Activated CD8-positive, alpha-beta memory T cell treated with anti-CD3 and anti-CD28 coated beads, Interleukin-2, amount 10 ng/mL, durations not matched to agents 7 days and 5 days (primary cell): ENCODE measurements at regions of chr16 and their contacts with region 1.

Region 1: GRCh38 chr16:3129137-3130131 is 5.4 kb upstream of the ZNF213 start:
- DNase-seq: peak; percentile 89
- ATAC-seq: peak; percentile 74
- H3K4me3 Mint-ChIP-seq: peak overlapping the region; percentile 88
- H3K27ac Mint-ChIP-seq: peak overlapping the region; percentile 88
- H3K4me1 Mint-ChIP-seq: peaks cover 58% of the 10 kb centered on the region
- H3K27me3 Mint-ChIP-seq: no peaks in the 10 kb centered on the region

Region 2: GRCh38 chr16:3045357-3045728 is 84.1 kb before region 1 on chr16:
- CTCF ChIA-PET with region 1: interaction called, 13 read pairs
- DNase-seq: peak; percentile 74
- ATAC-seq: peak; percentile 41
- H3K4me3 Mint-ChIP-seq: peak overlapping the region; percentile 88
- H3K27ac Mint-ChIP-seq: peak overlapping the region; percentile 83
- H3K4me1 Mint-ChIP-seq: peaks cover 40% of the 10 kb centered on the region
- H3K27me3 Mint-ChIP-seq: peaks cover 11% of the 10 kb centered on the region

Region 3: DNA sequence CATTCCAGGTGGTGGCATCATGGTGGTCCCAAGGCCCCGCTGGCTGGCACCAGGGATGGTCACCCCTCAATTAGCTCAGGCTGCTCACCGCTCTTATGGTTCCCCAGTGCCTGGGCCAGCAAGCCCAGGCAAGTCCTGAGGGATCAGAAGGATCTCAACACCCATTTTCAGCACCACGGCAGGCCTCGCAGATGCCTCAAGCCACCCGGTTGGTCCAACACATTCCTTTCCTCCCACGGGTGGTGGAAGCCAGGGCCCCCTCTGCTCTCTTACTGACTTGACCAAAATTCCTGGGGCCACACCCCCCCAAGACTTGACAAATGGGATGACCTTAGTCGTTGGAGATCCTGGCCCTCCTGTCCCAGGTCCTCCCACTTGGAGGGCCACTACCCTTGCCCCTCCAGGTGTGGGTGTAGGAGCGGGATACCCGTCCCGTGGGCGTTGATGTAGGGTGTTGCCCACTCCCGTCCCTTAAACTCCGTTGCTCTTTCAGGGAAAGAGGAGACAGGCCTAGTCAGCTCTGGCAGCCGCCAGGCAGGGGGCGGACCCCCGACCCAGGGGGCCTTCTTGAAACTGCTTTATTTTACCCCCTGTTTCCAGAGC is 11.1 kb before region 1 on chr16:
- CTCF ChIA-PET with region 1: interaction called, 25 read pairs
- DNase-seq: no peak
- ATAC-seq: no peak
- H3K4me3 Mint-ChIP-seq: no peak overlapping the region
- H3K27ac Mint-ChIP-seq: no peak overlapping the region
- H3K4me1 Mint-ChIP-seq: peaks cover 7% of the 10 kb centered on the region
- H3K27me3 Mint-ChIP-seq: peaks cover 5% of the 10 kb centered on the region

Region 4: GRCh38 chr16:3158471-3159314 is 29.3 kb after region 1 on chr16:
- CTCF ChIA-PET with region 1: interaction called, 14 read pairs
- DNase-seq: peak; percentile 96
- ATAC-seq: peak; percentile 88
- H3K4me3 Mint-ChIP-seq: peak overlapping the region; percentile 83
- H3K27ac Mint-ChIP-seq: peak overlapping the region; percentile 92
- H3K4me1 Mint-ChIP-seq: peaks cover 43% of the 10 kb centered on the region
- H3K27me3 Mint-ChIP-seq: peaks cover 25% of the 10 kb centered on the region

Region 5: GRCh38 chr16:3173892-3174617 is 44.6 kb after region 1 on chr16:
- CTCF ChIA-PET with region 1: interaction called, 16 read pairs
- DNase-seq: peak; percentile 58
- ATAC-seq: peak; percentile 13
- H3K4me3 Mint-ChIP-seq: peak overlapping the region; percentile 61
- H3K27ac Mint-ChIP-seq: no peak overlapping the region
- H3K4me1 Mint-ChIP-seq: peaks cover 38% of the 10 kb centered on the region
- H3K27me3 Mint-ChIP-seq: peaks cover 86% of the 10 kb centered on the region